HEK293 (cell line): ENCODE measurements at regions of chr20 and their contacts with region 1.

Region 1: GRCh38 chr20:48620519-48621254 is 207.1 kb downstream of the PREX1 start:
- H3K4me3 ChIP-seq: peak overlapping the region; percentile 31
- H3K27ac ChIP-seq: no peak overlapping the region
- H3K4me1 ChIP-seq: no peaks in the 10 kb centered on the region
- CTCF ChIP-seq: peak; percentile 89

Region 2: GRCh38 chr20:47677635-47678453 is 942.8 kb before region 1 on chr20:
- CTCF ChIA-PET with region 1: interaction called, 37 read pairs
- POLR2A ChIA-PET with region 1: no interaction called
- H3K4me3 ChIP-seq: no peak overlapping the region
- H3K27ac ChIP-seq: no peak overlapping the region
- H3K4me1 ChIP-seq: no peaks in the 10 kb centered on the region
- CTCF ChIP-seq: peak; percentile 73

Region 3: GRCh38 chr20:47785854-47786764 is 834.6 kb before region 1 on chr20:
- CTCF ChIA-PET with region 1: interaction called, 22 read pairs
- POLR2A ChIA-PET with region 1: no interaction called
- H3K4me3 ChIP-seq: peak overlapping the region; percentile 29
- H3K27ac ChIP-seq: peak overlapping the region; percentile 80
- H3K4me1 ChIP-seq: peaks cover 18% of the 10 kb centered on the region
- CTCF ChIP-seq: peak; percentile 87

Region 4: DNA sequence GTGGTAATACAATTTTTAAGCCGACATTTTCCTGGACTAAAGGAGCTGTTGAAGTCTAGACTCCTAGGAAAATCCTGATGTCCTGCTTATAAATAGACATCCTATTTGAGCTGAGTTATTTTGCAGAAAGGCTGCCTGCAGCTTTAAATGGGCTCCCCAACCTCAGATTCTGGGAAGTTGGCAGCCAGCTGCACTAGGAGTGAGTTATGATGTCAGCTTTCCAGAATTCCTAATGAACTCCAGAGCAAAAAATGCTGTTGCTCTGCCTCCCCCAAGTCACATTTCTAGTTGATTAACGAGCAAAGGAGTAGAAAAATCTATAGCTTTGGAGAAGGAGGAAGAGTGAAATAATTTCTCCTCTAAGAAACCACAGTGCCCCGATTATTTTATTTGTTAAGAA is 489.1 kb before region 1 on chr20:
- CTCF ChIA-PET with region 1: interaction called, 12 read pairs
- POLR2A ChIA-PET with region 1: no interaction called
- H3K4me3 ChIP-seq: no peak overlapping the region
- H3K27ac ChIP-seq: no peak overlapping the region
- H3K4me1 ChIP-seq: no peaks in the 10 kb centered on the region
- CTCF ChIP-seq: no peak

Region 5: GRCh38 chr20:48339190-48340062 is 281.3 kb before region 1 on chr20:
- CTCF ChIA-PET with region 1: interaction called, 13 read pairs
- POLR2A ChIA-PET with region 1: no interaction called
- H3K4me3 ChIP-seq: no peak overlapping the region
- H3K27ac ChIP-seq: no peak overlapping the region
- H3K4me1 ChIP-seq: no peaks in the 10 kb centered on the region
- CTCF ChIP-seq: no peak

Region 6: GRCh38 chr20:48482790-48483699 is 137.6 kb before region 1 on chr20:
- CTCF ChIA-PET with region 1: interaction called, 12 read pairs
- POLR2A ChIA-PET with region 1: no interaction called
- H3K4me3 ChIP-seq: no peak overlapping the region
- H3K27ac ChIP-seq: no peak overlapping the region
- H3K4me1 ChIP-seq: 0 out of 2 replicates have a peak, but pooled peaks cover 2% of the 10 kb centered on the region
- CTCF ChIP-seq: no peak

Region 7: DNA sequence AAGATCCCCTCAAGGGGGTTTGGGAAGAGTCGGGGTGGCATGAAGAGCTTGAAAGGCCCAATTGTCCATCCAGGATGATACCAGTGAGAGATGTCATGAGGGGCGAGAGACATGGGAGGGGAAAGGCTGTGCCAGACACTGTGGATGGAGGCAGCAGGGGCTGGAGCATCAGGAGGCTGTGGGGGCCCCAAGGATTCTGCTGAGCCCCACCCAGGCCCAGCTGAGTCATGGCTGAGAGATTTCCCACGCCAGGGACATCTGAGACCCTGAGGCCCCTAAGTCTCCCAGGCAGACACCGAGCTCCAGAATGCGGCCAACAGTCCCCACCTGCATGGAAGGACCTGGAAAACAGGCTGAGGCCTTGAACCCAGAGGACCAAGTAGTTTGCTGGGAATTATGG is 61.5 kb before region 1 on chr20:
- CTCF ChIA-PET with region 1: interaction called, 11 read pairs
- POLR2A ChIA-PET with region 1: no interaction called
- H3K4me3 ChIP-seq: no peak overlapping the region
- H3K27ac ChIP-seq: no peak overlapping the region
- H3K4me1 ChIP-seq: no peaks in the 10 kb centered on the region
- CTCF ChIP-seq: no peak